Head of caudate nucleus (tissue), 42 donors: ENCODE measurements at regions of chr13 and their contacts with region 1.

Region 1: GRCh38 chr13:76473552-76474134 is 412.6 kb downstream of the KCTD12 start:
- DNase-seq: peak; percentile 23 to 95 (median 83)

Region 2: DNA sequence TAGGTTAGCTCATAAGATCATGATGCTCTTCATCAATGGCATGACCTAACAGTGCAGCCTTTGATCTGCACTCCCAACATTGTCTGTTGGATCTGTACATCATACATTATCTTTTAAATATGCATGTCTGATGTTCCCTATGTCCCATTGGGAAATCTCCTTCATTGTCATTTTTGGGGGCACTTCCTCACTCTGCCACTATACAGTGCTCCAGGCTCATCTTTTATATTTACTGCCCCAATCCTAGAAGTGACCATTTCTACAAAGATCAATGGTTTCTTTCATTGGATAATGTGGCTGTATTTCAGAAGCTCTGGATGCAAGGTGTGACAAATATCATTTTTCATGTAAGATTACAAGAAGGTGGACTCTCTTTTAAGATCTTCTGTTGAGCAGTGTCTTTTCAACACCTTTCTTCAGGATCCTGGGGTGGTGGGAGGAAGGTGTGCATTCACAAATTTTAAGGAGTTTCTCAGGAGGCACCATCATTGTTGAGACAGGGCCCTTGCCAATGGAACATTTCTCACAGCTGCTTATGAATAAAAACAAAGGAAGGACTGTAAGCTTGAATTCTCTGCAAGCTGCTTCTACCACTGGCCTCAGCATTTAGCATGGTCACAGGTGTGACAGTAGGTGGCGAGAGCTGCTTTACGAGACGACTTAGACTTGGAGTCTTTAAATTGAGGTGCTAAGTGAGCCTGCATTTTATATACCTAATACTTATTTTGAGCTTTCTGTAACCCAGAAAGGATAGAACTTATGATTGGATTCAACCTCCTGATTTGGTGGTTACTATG is 434.5 kb before region 1 on chr13:
- intact Hi-C with region 1: no loop called
- DNase-seq: no peak

Region 3: DNA sequence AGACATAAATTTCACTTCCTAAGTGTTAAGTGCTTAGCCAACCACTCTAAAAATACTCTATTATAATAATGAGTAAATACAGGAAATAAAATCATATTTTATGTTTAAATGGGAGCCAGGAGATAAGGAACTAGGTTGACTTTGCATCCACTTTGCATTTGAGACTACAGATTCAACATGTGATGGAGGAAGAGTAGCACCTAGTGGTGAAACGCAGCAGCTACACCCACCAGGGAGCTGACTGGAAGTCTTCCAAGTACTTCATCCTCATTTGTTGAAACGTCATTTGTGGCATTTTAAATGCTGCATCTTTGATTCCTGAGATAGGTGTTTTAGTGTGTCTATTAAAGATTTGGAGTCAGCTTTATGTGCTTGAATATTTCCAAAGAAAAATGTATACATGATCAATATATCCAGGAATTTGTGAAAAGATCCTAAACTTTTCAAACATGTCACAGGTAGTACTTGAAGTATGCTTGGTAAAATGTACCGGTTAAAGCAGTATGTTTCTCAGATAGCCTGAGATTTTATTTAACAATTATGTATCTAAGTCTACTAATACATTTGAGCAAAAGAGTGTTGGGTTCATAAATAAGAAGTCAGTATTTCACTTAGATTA is 430.0 kb after region 1 on chr13:
- intact Hi-C with region 1: loop called (anchors 10 kb)
- DNase-seq: peak; percentile 44 to 88 (median 74)